CD4-positive, alpha-beta T cell (primary cell): ENCODE measurements at regions of chr1 and their contacts with region 1.

Region 1: GRCh38 chr1:101288491-101288944 is 51.7 kb downstream of the S1PR1 start:
- DNase-seq: peak; percentile 45 to 90 (median 64)
- ATAC-seq: peak; percentile 62
- H3K4me3 ChIP-seq: no peak overlapping the region
- H3K4me3 Mint-ChIP-seq: peak overlapping the region; percentile 25
- H3K27ac ChIP-seq: no peak overlapping the region
- H3K27ac Mint-ChIP-seq: peak overlapping the region; percentile 83
- H3K4me1 ChIP-seq: peaks cover 78% of the 10 kb centered on the region
- H3K4me1 Mint-ChIP-seq: peaks cover 76% of the 10 kb centered on the region
- H3K27me3 ChIP-seq: no peaks in the 10 kb centered on the region
- H3K27me3 Mint-ChIP-seq: no peaks in the 10 kb centered on the region
- CTCF ChIP-seq: peak; percentile 89

Region 2: GRCh38 chr1:101025657-101026504 is 262.6 kb before region 1 on chr1 and contains the start of gene DPH5:
- CTCF ChIA-PET with region 1: interaction called, 11 read pairs
- POLR2A ChIA-PET with region 1: no interaction called
- intact Hi-C with region 1: loop called (anchors 5 kb)
- DNase-seq: peak; percentile 77 to 91 (median 84)
- ATAC-seq: peak; percentile 94
- H3K4me3 ChIP-seq: peak within 1 kb of the TSS; percentile 77
- H3K4me3 Mint-ChIP-seq: peak within 1 kb of the TSS; percentile 97
- H3K27ac ChIP-seq: peak within 1 kb of the TSS; percentile 63 to 75
- H3K27ac Mint-ChIP-seq: peak within 1 kb of the TSS; percentile 98
- H3K4me1 ChIP-seq: peaks cover 19% of the 10 kb centered on the region
- H3K4me1 Mint-ChIP-seq: peaks cover 91% of the 10 kb centered on the region
- H3K27me3 ChIP-seq: no peaks in the 10 kb centered on the region
- H3K27me3 Mint-ChIP-seq: no peaks in the 10 kb centered on the region
- CTCF ChIP-seq: no peak
- total RNA-seq, gene DPH5: 31.3 to 35.4 TPM

Region 3: DNA sequence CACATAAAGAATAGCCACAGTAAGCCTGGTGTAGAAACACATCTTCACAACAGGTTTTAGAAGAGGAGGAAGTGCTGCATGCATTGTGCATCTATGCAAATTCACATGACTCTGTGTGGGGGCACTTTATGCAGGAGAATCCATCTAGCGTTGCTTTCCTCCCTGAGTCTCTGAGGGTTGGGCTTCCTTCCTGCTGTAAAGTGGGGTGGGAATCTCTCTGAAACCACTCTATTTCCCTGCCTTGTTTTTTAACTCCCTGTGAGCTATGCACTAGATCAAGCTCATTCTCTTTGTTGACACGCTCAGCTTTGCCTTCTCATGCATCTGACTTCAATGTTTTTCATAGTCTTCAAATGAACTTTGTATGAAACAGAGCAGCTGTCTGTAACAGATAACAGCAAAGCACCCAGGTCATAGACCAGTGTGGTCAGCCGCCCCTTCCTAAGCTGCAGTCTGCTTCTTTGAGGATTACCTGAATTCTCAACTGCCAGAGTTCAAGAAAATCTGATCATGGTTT is 160.2 kb before region 1 on chr1:
- CTCF ChIA-PET with region 1: interaction called, 19 read pairs
- POLR2A ChIA-PET with region 1: interaction called, 4 read pairs
- intact Hi-C with region 1: no loop called
- DNase-seq: peak in 13 of 14 experiments; percentile 5 to 64 (median 37)
- ATAC-seq: peak; percentile 71
- H3K4me3 ChIP-seq: no peak overlapping the region
- H3K4me3 Mint-ChIP-seq: peak overlapping the region; percentile 75
- H3K27ac ChIP-seq: peak overlapping the region; percentile 33 to 66
- H3K27ac Mint-ChIP-seq: peak overlapping the region; percentile 83
- H3K4me1 ChIP-seq: peaks cover 33% of the 10 kb centered on the region
- H3K4me1 Mint-ChIP-seq: peaks cover 73% of the 10 kb centered on the region
- H3K27me3 ChIP-seq: no peaks in the 10 kb centered on the region
- H3K27me3 Mint-ChIP-seq: no peaks in the 10 kb centered on the region
- CTCF ChIP-seq: no peak

Region 4: GRCh38 chr1:101247404-101248287 is 40.9 kb before region 1 on chr1:
- CTCF ChIA-PET with region 1: interaction called, 21 read pairs
- POLR2A ChIA-PET with region 1: interaction called, 37 read pairs
- intact Hi-C with region 1: no loop called
- DNase-seq: no peak
- ATAC-seq: no peak
- H3K4me3 ChIP-seq: no peak overlapping the region
- H3K4me3 Mint-ChIP-seq: peak overlapping the region; percentile 8
- H3K27ac ChIP-seq: no peak overlapping the region
- H3K27ac Mint-ChIP-seq: peak overlapping the region; percentile 40
- H3K4me1 ChIP-seq: peaks cover 44% of the 10 kb centered on the region
- H3K4me1 Mint-ChIP-seq: peaks cover 79% of the 10 kb centered on the region
- H3K27me3 ChIP-seq: no peaks in the 10 kb centered on the region
- H3K27me3 Mint-ChIP-seq: no peaks in the 10 kb centered on the region
- CTCF ChIP-seq: no peak

Region 5: GRCh38 chr1:101262630-101263348 is 25.7 kb before region 1 on chr1:
- CTCF ChIA-PET with region 1: interaction called, 13 read pairs
- POLR2A ChIA-PET with region 1: interaction called, 31 read pairs
- intact Hi-C with region 1: no loop called
- DNase-seq: peak in 5 of 14 experiments; percentile 12 to 87 (median 61)
- ATAC-seq: peak; percentile 55
- H3K4me3 ChIP-seq: peak overlapping the region; percentile 25
- H3K4me3 Mint-ChIP-seq: peak overlapping the region; percentile 83
- H3K27ac ChIP-seq: peak overlapping the region in 1 of 2 donors; percentile 12
- H3K27ac Mint-ChIP-seq: peak overlapping the region; percentile 88
- H3K4me1 ChIP-seq: peaks cover 80% of the 10 kb centered on the region
- H3K4me1 Mint-ChIP-seq: peaks cover 85% of the 10 kb centered on the region
- H3K27me3 ChIP-seq: no peaks in the 10 kb centered on the region
- H3K27me3 Mint-ChIP-seq: no peaks in the 10 kb centered on the region
- CTCF ChIP-seq: no peak

Region 6: GRCh38 chr1:101357444-101357986 is 69.0 kb after region 1 on chr1:
- CTCF ChIA-PET with region 1: interaction called, 15 read pairs
- POLR2A ChIA-PET with region 1: interaction called, 8 read pairs
- intact Hi-C with region 1: loop called in 1 of 2 experiments (anchors 2 kb)
- DNase-seq: peak; percentile 43 to 92 (median 60)
- ATAC-seq: peak; percentile 100
- H3K4me3 ChIP-seq: no peak overlapping the region
- H3K4me3 Mint-ChIP-seq: no peak overlapping the region
- H3K27ac ChIP-seq: no peak overlapping the region
- H3K27ac Mint-ChIP-seq: peak overlapping the region; percentile 5
- H3K4me1 ChIP-seq: peaks cover 7% of the 10 kb centered on the region
- H3K4me1 Mint-ChIP-seq: peaks cover 9% of the 10 kb centered on the region
- H3K27me3 ChIP-seq: no peaks in the 10 kb centered on the region
- H3K27me3 Mint-ChIP-seq: no peaks in the 10 kb centered on the region
- CTCF ChIP-seq: peak; percentile 84